Right ventricle myocardium inferior (tissue), 1 donor: ENCODE measurements at regions of chr19 and their contacts with region 1.

Region 1: GRCh38 chr19:11673608-11674041 is 65.1 kb downstream of the ZNF823 start:
- DNase-seq: peak; percentile 82
- ATAC-seq: peak; percentile 92

Region 2: DNA sequence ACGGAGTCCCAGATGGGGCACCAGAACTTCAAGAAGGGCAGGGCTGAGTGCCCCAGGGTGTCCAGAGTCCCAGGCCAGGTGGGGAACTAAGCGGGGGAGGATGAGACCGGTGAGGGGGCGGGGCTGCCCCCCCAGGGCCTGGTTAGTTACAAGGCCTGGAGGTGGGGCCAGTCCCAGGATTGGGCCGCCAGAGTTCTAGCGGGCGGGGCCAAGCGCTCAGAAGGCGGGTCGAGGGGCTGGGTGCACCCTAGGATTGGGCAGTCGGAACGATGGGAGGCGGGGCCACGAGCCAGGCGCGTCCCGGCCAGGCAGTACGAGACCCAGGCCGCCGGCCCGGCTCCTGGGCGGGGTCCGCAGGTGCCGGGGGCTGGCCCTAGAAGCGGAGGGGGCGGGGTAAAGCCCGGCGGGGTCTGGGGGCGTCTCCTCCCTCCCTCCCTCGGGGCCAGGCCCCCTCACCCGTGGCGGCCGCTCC is 168.6 kb before region 1 on chr19:
- intact Hi-C with region 1: no loop called
- DNase-seq: peak; percentile 98
- ATAC-seq: peak; percentile 96

Region 3: GRCh38 chr19:11639602-11640471 is 33.8 kb before region 1 on chr19:
- intact Hi-C with region 1: no loop called
- DNase-seq: peak; percentile 96
- ATAC-seq: peak; percentile 100

Region 4: DNA sequence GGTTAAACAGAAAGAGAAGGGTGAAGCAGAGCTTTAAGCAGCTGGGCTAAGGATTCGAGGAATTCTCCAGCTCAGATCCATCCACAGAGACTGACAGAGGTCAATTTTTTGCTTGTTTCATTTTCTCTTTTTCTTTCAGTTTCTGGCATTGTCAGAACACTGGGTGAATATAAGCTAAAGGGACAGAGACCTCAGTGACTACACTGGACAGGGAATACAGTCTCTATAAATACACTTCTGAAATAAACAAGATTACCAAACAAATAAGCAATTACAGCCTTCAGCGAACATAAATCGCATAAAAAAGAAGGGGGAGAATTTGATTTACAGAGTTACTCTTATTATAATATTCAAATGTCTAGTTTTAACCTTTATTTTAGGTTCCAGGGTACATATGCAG is 89.5 kb after region 1 on chr19:
- intact Hi-C with region 1: no loop called
- DNase-seq: no peak
- ATAC-seq: no peak

Region 5: GRCh38 chr19:11787536-11787935 is 113.9 kb after region 1 on chr19:
- intact Hi-C with region 1: loop called (anchors 5 kb)
- DNase-seq: no peak
- ATAC-seq: no peak

Region 6: GRCh38 chr19:11868188-11868587 is 194.6 kb after region 1 on chr19:
- intact Hi-C with region 1: no loop called
- DNase-seq: no peak
- ATAC-seq: no peak